AG04450 (cell line): ENCODE measurements at regions of chr7 and their contacts with region 1.

Region 1: DNA sequence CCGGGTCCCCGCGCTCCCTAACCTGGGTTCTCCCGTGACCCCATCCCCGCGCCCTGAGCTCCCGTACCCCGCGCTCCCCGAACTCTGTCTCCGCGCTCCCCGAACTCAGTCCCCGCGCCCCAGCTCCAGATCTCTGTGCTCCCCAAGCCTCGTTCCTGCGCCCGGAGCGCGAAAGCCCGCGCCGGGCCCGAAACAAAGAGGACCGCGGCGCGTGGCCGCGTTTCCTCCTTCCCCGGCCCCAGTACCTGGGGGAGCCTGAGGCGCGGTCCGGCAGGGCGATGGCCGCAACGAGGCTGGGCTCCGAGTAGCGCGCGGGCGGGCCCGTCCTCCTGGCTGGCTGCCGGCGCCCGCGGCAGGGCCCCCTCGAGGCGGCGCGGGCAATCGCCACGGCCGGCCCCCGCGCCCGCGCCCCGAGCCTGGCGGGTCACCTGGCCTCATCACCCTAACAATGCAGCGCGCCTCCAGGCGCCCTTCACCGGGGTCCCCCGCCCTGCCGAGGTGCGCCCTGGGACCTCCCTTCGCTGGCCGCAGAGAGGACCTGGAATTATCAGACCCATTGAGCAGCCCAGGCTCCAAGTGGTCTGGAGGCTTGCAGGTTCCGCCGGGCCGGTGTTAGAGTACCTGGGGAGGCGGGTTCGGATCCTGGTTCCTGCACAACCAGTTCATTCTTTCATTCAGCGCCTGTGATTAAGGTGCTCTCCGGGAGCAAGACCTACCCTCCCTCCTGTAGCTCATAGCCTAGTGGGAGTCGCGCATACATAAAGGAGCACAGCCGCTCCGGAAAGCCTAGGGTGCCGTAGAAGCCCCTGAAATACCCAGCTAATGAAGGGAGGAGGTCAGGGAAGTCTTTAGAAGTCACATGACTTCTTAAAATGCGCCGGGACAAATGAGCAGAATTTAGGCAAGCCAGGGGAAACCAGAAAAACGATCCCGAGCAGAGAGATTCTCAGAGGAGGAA is at the start of gene TNS3:
- DNase-seq: no peak
- H3K4me3 ChIP-seq: peak within 1 kb of the TSS; percentile 88
- H3K27ac ChIP-seq: peak within 1 kb of the TSS; percentile 82
- H3K27me3 ChIP-seq: no peaks in the 10 kb centered on the region
- CTCF ChIP-seq: no peak; the same call in 1 of the 2 replicates
- polyA plus RNA-seq, gene TNS3: 121 and 131 TPM in 2 replicates

Region 2: GRCh38 chr7:47600199-47601118 is 18.4 kb after region 1 on chr7:
- CTCF ChIA-PET with region 1: interaction called, 4 read pairs
- POLR2A ChIA-PET with region 1: interaction called, 11 read pairs
- DNase-seq: no peak
- H3K4me3 ChIP-seq: peak overlapping the region; percentile 17; the same call in 1 of the 2 replicates
- H3K27ac ChIP-seq: peak overlapping the region; percentile 96
- H3K27me3 ChIP-seq: no peaks in the 10 kb centered on the region
- CTCF ChIP-seq: no peak